Activated naive CD4-positive, alpha-beta T cell treated with anti-CD3 and anti-CD28 coated beads for 36 hours (primary cell): ENCODE measurements at regions of chr12 and their contacts with region 1.

Region 1: GRCh38 chr12:113184900-113185773 is at the starts of genes DDX54 and RITA1:
- DNase-seq: peak; percentile 92
- H3K4me3 Mint-ChIP-seq: peak within 1 kb of the TSS; percentile 97
- H3K27ac Mint-ChIP-seq: peak within 1 kb of the TSS; percentile 92
- H3K4me1 Mint-ChIP-seq: peaks cover 46% of the 10 kb centered on the region
- H3K27me3 Mint-ChIP-seq: no peaks in the 10 kb centered on the region
- total RNA-seq, gene DDX54: 114 to 116 TPM
- total RNA-seq, gene RITA1: 14.0 to 16.1 TPM

Region 2: DNA sequence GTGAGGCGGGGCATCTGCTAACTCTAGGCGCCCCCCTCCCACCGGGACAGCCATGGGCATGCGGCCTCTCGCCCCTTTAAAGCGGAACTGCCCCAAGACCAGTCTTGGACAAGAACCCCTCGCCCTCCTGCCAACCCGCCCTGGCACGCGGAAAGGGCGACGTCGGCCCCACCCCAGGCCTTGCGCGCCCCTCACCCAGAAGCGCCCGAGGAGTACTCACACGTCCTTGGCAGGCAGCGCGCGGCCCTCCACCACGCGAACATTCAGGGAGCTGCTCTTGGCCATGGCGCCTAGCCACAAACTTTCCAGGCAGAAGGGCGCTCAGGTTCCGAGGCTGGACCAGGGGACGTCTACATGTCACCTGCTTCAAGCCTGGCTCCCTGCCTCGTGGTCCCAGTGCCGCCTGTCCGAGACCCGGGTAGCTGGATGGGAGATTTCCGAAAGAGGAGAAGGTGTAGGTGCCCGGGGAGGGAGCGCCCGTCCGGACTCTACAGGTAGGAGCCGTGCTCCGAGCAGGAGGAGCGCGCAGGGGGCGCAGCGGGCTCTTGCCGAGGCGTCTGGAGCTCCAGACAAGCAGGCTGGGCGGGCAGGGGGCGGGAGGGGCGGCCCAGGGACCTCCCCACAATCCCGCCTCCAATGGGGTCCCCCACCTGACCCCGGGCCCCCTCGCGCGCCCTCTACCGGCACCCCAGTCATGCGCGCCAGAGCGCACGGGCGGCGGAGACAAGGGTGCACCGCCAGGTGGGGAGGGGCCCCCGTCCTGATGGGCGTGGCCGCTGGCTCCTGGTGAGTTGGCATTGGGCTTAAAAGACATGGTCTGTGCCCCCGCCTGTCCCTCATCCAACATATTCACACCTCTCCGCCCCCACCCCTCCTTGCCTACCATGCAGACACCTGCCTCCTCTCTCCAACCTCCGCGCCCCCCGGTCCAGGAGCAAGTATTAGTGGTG is 49.7 kb before region 1 on chr12 and contains the start of gene RASAL1:
- CTCF ChIA-PET with region 1: interaction called, 6 read pairs
- intact Hi-C with region 1: loop called (anchors 1 kb)
- DNase-seq: peak; percentile 90
- H3K4me3 Mint-ChIP-seq: peak within 1 kb of the TSS; percentile 70
- H3K27ac Mint-ChIP-seq: peak within 1 kb of the TSS; percentile 73
- H3K4me1 Mint-ChIP-seq: peaks cover 18% of the 10 kb centered on the region
- H3K27me3 Mint-ChIP-seq: no peaks in the 10 kb centered on the region
- total RNA-seq, gene RASAL1: 2.6 to 3.2 TPM

Region 3: GRCh38 chr12:113196996-113197395 is 11.9 kb after region 1 on chr12:
- CTCF ChIA-PET with region 1: interaction called, 14 read pairs
- intact Hi-C with region 1: no loop called
- DNase-seq: peak; percentile 83
- H3K4me3 Mint-ChIP-seq: no peak overlapping the region
- H3K27ac Mint-ChIP-seq: no peak overlapping the region
- H3K4me1 Mint-ChIP-seq: peaks cover 6% of the 10 kb centered on the region
- H3K27me3 Mint-ChIP-seq: no peaks in the 10 kb centered on the region

Region 4: DNA sequence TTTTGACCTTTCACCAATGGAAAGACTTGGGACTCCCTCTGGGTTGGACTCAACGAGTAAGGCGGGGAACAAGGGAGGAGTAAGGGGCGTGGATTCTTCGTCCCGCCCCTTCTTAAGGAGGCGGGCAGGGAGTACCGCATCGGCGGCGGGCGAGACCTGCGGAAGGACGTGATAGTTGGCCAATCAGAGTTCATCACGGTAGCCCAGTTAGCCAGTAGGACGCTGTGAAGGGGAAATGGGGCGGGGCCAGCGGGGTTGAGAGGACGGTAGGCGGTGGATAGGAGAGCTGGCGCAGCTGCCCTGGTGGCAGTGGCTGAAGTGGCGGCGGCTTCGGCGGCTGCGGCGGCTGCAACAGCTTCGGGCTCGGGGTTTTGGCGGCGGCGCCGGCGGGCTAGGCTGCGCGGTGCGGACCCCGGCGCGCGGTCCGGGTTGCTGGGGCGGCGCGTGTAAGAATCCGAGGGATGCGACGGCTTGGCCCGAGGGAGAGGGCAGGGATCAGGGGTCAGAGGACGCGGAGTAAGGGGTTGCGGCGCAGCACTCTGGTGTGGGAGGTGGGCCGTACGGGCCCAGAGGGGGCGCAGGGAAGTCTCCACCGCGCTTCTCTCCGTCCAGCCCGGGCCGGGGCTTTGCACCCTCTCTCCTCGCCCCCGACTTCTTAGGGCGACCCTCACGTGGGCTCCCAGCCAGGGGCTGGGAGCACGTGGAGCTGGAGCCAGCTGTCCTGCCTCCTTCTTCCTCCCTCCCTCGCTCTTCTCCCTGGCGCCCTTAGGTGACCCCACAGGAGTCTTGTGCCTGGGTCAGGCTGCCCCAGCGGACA is 36.3 kb after region 1 on chr12 and contains the start of gene TPCN1:
- CTCF ChIA-PET with region 1: interaction called, 6 read pairs
- intact Hi-C with region 1: loop called (anchors 1 kb)
- DNase-seq: peak; percentile 100
- H3K4me3 Mint-ChIP-seq: peak within 1 kb of the TSS; percentile 96
- H3K27ac Mint-ChIP-seq: peak within 1 kb of the TSS; percentile 92
- H3K4me1 Mint-ChIP-seq: peaks cover 40% of the 10 kb centered on the region
- H3K27me3 Mint-ChIP-seq: no peaks in the 10 kb centered on the region
- total RNA-seq, gene TPCN1: 47.3 to 49.2 TPM

Region 5: GRCh38 chr12:113334786-113335540 is 149.8 kb after region 1 on chr12 and contains the start of gene SLC8B1:
- CTCF ChIA-PET with region 1: no interaction called
- intact Hi-C with region 1: loop called (anchors 1 kb)
- DNase-seq: peak; percentile 87
- H3K4me3 Mint-ChIP-seq: peak within 1 kb of the TSS; percentile 96
- H3K27ac Mint-ChIP-seq: peak within 1 kb of the TSS; percentile 84
- H3K4me1 Mint-ChIP-seq: peaks cover 34% of the 10 kb centered on the region
- H3K27me3 Mint-ChIP-seq: no peaks in the 10 kb centered on the region
- total RNA-seq, gene SLC8B1: 20.2 to 20.4 TPM

Region 6: GRCh38 chr12:113955109-113955970 is 770.2 kb after region 1 on chr12:
- CTCF ChIA-PET with region 1: no interaction called
- intact Hi-C with region 1: no loop called
- DNase-seq: no peak
- H3K4me3 Mint-ChIP-seq: no peak overlapping the region
- H3K27ac Mint-ChIP-seq: no peak overlapping the region
- H3K4me1 Mint-ChIP-seq: peaks cover 1% of the 10 kb centered on the region
- H3K27me3 Mint-ChIP-seq: no peaks in the 10 kb centered on the region